ENCODE measurements at regions of chr13 and their contacts with region 1.

Region 1: GRCh38 chr13:112689303-112690165 is at the start of gene ATP11A:
- DNase-seq: peak; percentile 72 to 91
- H3K4me3 ChIP-seq: peak within 1 kb of the TSS; percentile 97
- H3K27ac ChIP-seq: 0 out of 2 replicates have a peak within 1 kb of the TSS, but pooled peaks have one; percentile 13
- H3K4me1 ChIP-seq: peaks cover 50% of the 10 kb centered on the region
- H3K27me3 ChIP-seq: no peaks in the 10 kb centered on the region
- CTCF ChIP-seq: no peak
- total RNA-seq, gene ATP11A: 65.6 and 92.2 TPM in 2 replicates

Region 2: DNA sequence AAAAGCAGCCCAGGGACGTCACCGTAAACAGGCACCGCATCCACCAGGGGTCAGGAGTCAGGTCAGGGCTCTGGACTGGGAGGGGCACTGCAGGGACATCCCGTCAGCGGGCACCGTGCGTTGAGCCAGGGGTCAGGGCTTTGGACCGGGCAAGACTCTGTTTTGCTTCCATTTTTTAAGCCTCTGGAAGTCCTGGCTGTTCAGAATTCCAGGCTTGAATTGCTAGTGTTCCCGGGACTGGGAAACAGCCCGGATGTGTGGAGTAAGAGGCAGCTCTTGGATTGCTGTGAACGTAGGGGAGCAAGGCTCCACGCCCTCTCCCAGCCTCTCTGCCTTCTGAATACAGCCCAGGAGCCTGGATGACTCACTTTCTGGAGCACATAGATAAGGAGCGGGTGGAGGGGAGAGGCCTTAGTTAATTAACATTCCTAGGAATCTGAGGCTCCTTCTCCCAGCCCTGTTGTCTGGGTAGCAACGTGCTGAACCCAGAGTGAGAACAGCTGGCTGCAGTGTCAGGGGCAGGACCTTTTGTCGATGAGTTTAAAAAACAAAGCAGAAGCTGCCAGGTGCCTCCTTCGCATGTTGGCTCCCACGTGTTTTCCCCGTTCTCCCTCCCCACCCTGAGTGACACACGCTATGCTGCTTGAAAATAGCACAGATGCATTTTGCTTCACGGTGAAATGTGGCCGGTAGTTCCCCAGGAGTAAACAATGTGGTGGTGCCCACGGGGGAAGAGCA is 22.2 kb after region 1 on chr13:
- CTCF ChIA-PET with region 1: interaction called, 3 read pairs
- POLR2A ChIA-PET with region 1: interaction called, 11 read pairs
- intact Hi-C with region 1: no loop called
- DNase-seq: peak; percentile 85 to 97
- H3K4me3 ChIP-seq: peak overlapping the region; percentile 47
- H3K27ac ChIP-seq: peak overlapping the region; percentile 73
- H3K4me1 ChIP-seq: peaks cover 51% of the 10 kb centered on the region
- H3K27me3 ChIP-seq: no peaks in the 10 kb centered on the region
- CTCF ChIP-seq: peak; percentile 60

Region 3: GRCh38 chr13:112725346-112726015 is 35.9 kb after region 1 on chr13:
- CTCF ChIA-PET with region 1: no interaction called
- POLR2A ChIA-PET with region 1: no interaction called
- intact Hi-C with region 1: loop called (anchors 1 kb)
- DNase-seq: peak; percentile 71 to 94
- H3K4me3 ChIP-seq: peak overlapping the region; percentile 48
- H3K27ac ChIP-seq: peak overlapping the region; percentile 81
- H3K4me1 ChIP-seq: peaks cover 70% of the 10 kb centered on the region
- H3K27me3 ChIP-seq: no peaks in the 10 kb centered on the region
- CTCF ChIP-seq: no peak

Region 4: DNA sequence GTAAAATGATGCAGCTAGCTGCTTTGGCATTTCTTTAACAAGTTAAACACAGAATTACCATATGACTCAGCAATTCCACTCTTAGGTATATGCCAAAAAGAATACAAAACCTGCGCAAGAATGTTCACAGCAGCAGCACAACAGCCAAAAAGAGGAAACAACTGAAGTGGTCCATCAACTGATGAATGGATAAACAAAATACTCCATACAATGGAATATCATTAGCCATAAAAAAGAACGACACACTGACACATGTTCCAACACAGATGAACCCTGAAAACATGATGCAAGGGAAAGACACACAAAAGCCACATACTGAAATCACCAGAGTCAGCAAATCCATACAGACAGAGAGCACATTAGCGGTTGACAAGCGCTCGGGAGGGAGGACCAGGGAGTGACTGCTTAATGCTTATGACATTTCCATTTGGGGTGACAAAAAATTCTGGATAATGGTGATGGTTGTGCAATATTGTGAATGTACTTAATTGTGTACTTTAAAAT is 515.9 kb after region 1 on chr13:
- CTCF ChIA-PET with region 1: no interaction called
- POLR2A ChIA-PET with region 1: no interaction called
- intact Hi-C with region 1: no loop called
- DNase-seq: peak in 1 of 2 experiments; percentile 29
- H3K4me3 ChIP-seq: no peak overlapping the region; the same call in 1 of the 2 replicates
- H3K27ac ChIP-seq: peak overlapping the region; percentile 33
- H3K4me1 ChIP-seq: peaks cover 22% of the 10 kb centered on the region
- H3K27me3 ChIP-seq: no peaks in the 10 kb centered on the region
- CTCF ChIP-seq: no peak

Measured in PC-9 (cell line).